Endothelial cell of umbilical vein (primary cell): ENCODE measurements at regions of chr11 and their contacts with region 1.

Region 1: GRCh38 chr11:5291207-5291838 is 10.4 kb downstream of the OR51B4 start:
- DNase-seq: peak; percentile 32
- H3K4me3 ChIP-seq: no peak overlapping the region
- H3K27ac ChIP-seq: no peak overlapping the region
- H3K4me1 ChIP-seq: no peaks in the 10 kb centered on the region
- H3K27me3 ChIP-seq: no peaks in the 10 kb centered on the region
- CTCF ChIP-seq: peak; percentile 55 to 64
- POLR2A ChIP-seq: no peak

Region 2: GRCh38 chr11:5204787-5205186 is 86.5 kb before region 1 on chr11:
- CTCF ChIA-PET with region 1: interaction called, 8 read pairs
- POLR2A ChIA-PET with region 1: no interaction called
- dilution Hi-C with region 1: no loop called
- intact Hi-C with region 1: loop called (anchors 1 kb)
- DNase-seq: peak; percentile 72
- H3K4me3 ChIP-seq: no peak overlapping the region
- H3K27ac ChIP-seq: no peak overlapping the region
- H3K4me1 ChIP-seq: no peaks in the 10 kb centered on the region
- H3K27me3 ChIP-seq: no peaks in the 10 kb centered on the region
- CTCF ChIP-seq: peak; percentile 32 to 42
- POLR2A ChIP-seq: no peak

Region 3: GRCh38 chr11:5280582-5281102 is 10.7 kb before region 1 on chr11:
- CTCF ChIA-PET with region 1: interaction called, 12 read pairs
- POLR2A ChIA-PET with region 1: interaction called, 3 read pairs
- dilution Hi-C with region 1: no loop called
- intact Hi-C with region 1: no loop called
- DNase-seq: peak; percentile 96
- H3K4me3 ChIP-seq: no peak overlapping the region
- H3K27ac ChIP-seq: peak overlapping the region; percentile 5
- H3K4me1 ChIP-seq: peaks cover 11% of the 10 kb centered on the region
- H3K27me3 ChIP-seq: no peaks in the 10 kb centered on the region
- CTCF ChIP-seq: no peak
- POLR2A ChIP-seq: no peak

Region 4: GRCh38 chr11:5380740-5381342 is 89.5 kb after region 1 on chr11:
- CTCF ChIA-PET with region 1: no interaction called
- POLR2A ChIA-PET with region 1: no interaction called
- dilution Hi-C with region 1: no loop called
- intact Hi-C with region 1: loop called (anchors 5 kb)
- DNase-seq: peak; percentile 69
- H3K4me3 ChIP-seq: no peak overlapping the region
- H3K27ac ChIP-seq: no peak overlapping the region
- H3K4me1 ChIP-seq: no peaks in the 10 kb centered on the region
- H3K27me3 ChIP-seq: peaks cover 0 to 2% of the 10 kb centered on the region in 2 experiments
- CTCF ChIP-seq: peak; percentile 67 to 84
- POLR2A ChIP-seq: no peak